Tibial artery (tissue), 4 donors: ENCODE measurements at regions of chr4 and their contacts with region 1.

Region 1: GRCh38 chr4:186669159-186669731 is 54.4 kb downstream of the FAT1 start:
- DNase-seq: peak in 1 of 2 donors; percentile 87
- H3K4me3 ChIP-seq: peak overlapping the region; percentile 24 to 42
- H3K27ac ChIP-seq: peak overlapping the region; percentile 28 to 36
- H3K4me1 ChIP-seq: peaks cover 0 to 28% (median 12%) of the 10 kb centered on the region in 4 donors
- H3K27me3 ChIP-seq: no peaks in the 10 kb centered on the region
- CTCF ChIP-seq: peak; percentile 60 to 66

Region 2: DNA sequence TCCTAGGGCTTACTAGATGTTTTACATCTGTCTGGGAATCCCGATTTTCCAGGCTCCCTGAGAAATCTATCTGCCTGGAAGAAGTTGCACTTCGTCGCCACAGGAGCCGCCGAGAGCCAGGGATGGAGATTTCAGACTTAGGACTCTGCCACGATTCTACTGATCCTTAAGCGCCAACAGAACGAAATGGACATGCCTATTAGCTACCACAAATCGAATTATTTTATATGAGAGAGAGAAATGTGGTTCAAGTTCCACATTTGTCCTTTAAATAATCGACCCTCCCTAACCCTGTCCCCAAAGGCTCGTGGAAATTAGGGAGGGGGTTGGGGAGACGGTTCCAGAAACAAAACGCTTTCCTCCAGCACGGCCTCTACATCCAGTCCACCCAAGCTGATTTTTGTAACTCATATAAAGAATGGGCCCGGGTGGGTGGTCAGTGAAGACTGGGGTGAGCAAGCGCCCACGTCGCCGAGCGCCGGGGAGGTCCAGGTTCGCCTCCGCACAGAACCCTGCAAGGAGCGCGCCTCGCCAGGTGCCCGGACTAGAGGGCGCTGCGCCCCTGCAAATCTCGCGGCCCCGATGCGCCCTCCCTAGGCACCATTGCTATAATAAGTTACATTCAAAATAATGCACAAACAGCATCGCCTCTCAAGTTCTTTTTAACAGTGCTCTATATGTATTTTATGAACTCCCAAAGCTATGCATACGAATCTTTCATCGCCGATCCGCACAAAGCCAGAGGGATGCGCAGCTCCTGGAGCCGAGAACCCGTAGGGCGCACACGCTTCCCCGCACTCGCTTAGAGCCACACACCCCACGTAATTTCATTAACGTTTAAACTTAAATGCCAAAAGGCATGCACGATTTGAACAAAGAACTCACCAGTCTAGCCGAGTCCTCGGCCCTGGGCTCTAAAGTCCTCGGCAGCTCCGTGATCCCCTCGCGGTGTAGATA is 56.5 kb after region 1 on chr4:
- intact Hi-C with region 1: loop called (anchors 5 kb)
- DNase-seq: peak; percentile 79 to 90
- H3K4me3 ChIP-seq: peak overlapping the region; percentile 74 to 91
- H3K27ac ChIP-seq: peak overlapping the region; percentile 91 to 94
- H3K4me1 ChIP-seq: peaks cover 0 to 31% (median 4%) of the 10 kb centered on the region in 4 donors
- H3K27me3 ChIP-seq: no peaks in the 10 kb centered on the region
- CTCF ChIP-seq: peak; percentile 42 to 63